ENCODE measurements at regions of chr20 and their contacts with region 1.

Region 1: GRCh38 chr20:36605399-36606157 is at the start of gene RAB5IF:
- DNase-seq: peak; percentile 90
- H3K4me3 ChIP-seq: peak within 1 kb of the TSS; percentile 74 to 100 (median 87)
- H3K27ac ChIP-seq: peak within 1 kb of the TSS; percentile 89 to 98 (median 97)
- H3K4me1 ChIP-seq: peaks cover 11 to 37% (median 12%) of the 10 kb centered on the region in 3 donors
- H3K27me3 ChIP-seq: no peaks in the 10 kb centered on the region
- CTCF ChIP-seq: peak; percentile 86 to 99 (median 94)
- POLR2A ChIP-seq: peak in 3 of 4 donors; percentile 89 to 95 (median 91)
- total RNA-seq, gene RAB5IF: 203 to 373 (median 267) TPM

Region 2: GRCh38 chr20:36555248-36555647 is 50.3 kb before region 1 on chr20:
- intact Hi-C with region 1: loop called (anchors 5 kb)
- DNase-seq: no peak
- H3K4me3 ChIP-seq: no peak overlapping the region
- H3K27ac ChIP-seq: no peak overlapping the region
- H3K4me1 ChIP-seq: peaks cover 0 to 24% (median 16%) of the 10 kb centered on the region in 3 donors
- H3K27me3 ChIP-seq: no peaks in the 10 kb centered on the region
- CTCF ChIP-seq: no peak
- POLR2A ChIP-seq: no peak

Region 3: DNA sequence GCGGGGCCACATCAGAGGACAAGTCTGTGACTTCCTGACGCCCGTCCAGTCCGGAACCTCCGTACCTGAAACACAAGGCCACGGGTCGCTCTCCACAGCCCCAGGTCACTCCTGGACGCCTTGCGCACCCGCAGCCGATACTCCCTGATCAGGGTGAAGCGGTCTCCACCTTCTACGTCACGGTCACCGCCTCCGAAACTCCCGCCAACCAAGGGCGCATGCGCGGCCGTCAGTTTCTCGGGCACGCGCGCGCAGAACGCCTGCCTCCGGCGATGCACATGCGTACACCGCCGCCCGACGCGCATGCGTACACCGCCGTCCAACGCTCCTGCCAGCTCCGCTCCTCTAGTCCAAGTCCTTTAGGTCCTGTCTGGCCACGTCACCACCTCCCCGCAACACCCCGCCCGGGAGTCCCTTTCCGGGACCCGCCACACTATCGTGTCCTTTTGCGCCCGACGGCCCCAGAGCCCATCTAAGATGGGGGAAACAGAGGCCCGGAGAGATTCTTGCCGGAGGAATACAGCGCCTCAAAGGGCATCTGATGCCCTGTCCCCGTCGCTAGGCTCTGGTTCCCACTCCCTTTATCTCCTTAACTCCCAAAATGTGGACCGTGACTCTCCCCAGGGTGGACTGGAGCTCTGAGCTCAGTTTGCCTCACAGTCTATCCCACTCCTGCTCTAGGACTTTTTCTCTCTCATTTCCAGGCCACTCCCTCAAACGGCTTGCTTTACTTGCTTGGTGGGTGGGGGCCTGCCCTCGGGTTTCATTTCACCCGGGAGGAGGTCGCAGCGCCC is 168.2 kb after region 1 on chr20 and contains the start of gene DSN1:
- intact Hi-C with region 1: loop called (anchors 5 kb)
- DNase-seq: peak; percentile 80
- H3K4me3 ChIP-seq: peak within 1 kb of the TSS; percentile 65 to 81 (median 75)
- H3K27ac ChIP-seq: peak within 1 kb of the TSS; percentile 92 to 99 (median 96)
- H3K4me1 ChIP-seq: peaks cover 7 to 47% (median 23%) of the 10 kb centered on the region in 3 donors
- H3K27me3 ChIP-seq: no peaks in the 10 kb centered on the region
- CTCF ChIP-seq: peak in 2 of 6 experiments; percentile 30 to 42
- POLR2A ChIP-seq: peak in 3 of 4 donors; percentile 40 to 77 (median 58)
- total RNA-seq, gene DSN1: 6.9 to 13.0 (median 9.7) TPM

Measured in esophagus squamous epithelium (tissue), 5 donors.